ENCODE measurements at regions of chr13 and their contacts with region 1.

Region 1: GRCh38 chr13:83819156-83819555 is 63.1 kb downstream of the SLITRK1 start:
- DNase-seq: no peak
- H3K4me3 ChIP-seq: no peak overlapping the region
- H3K27ac ChIP-seq: no peak overlapping the region
- H3K4me1 ChIP-seq: no peaks in the 10 kb centered on the region
- H3K27me3 ChIP-seq: no peaks in the 10 kb centered on the region
- CTCF ChIP-seq: no peak

Region 2: GRCh38 chr13:83414393-83414792 is 404.8 kb before region 1 on chr13:
- CTCF ChIA-PET with region 1: no interaction called
- POLR2A ChIA-PET with region 1: no interaction called
- intact Hi-C with region 1: no loop called
- DNase-seq: no peak
- H3K4me3 ChIP-seq: no peak overlapping the region
- H3K27ac ChIP-seq: no peak overlapping the region
- H3K4me1 ChIP-seq: no peaks in the 10 kb centered on the region
- H3K27me3 ChIP-seq: no peaks in the 10 kb centered on the region
- CTCF ChIP-seq: no peak

Region 3: GRCh38 chr13:83681547-83681946 is 137.6 kb before region 1 on chr13:
- CTCF ChIA-PET with region 1: no interaction called
- POLR2A ChIA-PET with region 1: no interaction called
- intact Hi-C with region 1: no loop called
- DNase-seq: no peak
- H3K4me3 ChIP-seq: no peak overlapping the region
- H3K27ac ChIP-seq: no peak overlapping the region
- H3K4me1 ChIP-seq: no peaks in the 10 kb centered on the region
- H3K27me3 ChIP-seq: no peaks in the 10 kb centered on the region
- CTCF ChIP-seq: no peak

Region 4: GRCh38 chr13:83765796-83766195 is 53.4 kb before region 1 on chr13:
- CTCF ChIA-PET with region 1: no interaction called
- POLR2A ChIA-PET with region 1: no interaction called
- intact Hi-C with region 1: no loop called
- DNase-seq: no peak
- H3K4me3 ChIP-seq: no peak overlapping the region
- H3K27ac ChIP-seq: no peak overlapping the region
- H3K4me1 ChIP-seq: no peaks in the 10 kb centered on the region
- H3K27me3 ChIP-seq: no peaks in the 10 kb centered on the region
- CTCF ChIP-seq: no peak

Region 5: DNA sequence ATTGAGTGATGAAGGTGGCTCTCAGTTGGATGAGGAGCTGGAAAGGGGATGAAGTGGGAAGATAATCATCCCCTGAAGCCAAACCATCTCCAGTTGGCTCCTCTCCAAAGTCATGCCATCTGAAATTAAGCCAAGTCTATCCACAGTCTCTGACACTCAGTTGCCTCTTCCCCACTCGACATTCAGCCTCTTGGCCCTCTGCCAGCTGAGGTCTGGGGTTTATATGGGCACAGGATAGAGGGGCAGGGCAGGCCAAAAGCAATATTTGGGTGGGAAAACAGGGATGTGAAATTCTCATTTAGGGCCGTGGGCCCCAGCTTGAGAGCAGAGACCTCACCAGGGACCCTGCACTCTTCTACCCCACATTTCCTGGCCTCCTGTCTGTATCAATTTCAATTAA is 22.8 kb before region 1 on chr13:
- CTCF ChIA-PET with region 1: no interaction called
- POLR2A ChIA-PET with region 1: no interaction called
- intact Hi-C with region 1: loop called (anchors 2 kb)
- DNase-seq: no peak
- H3K4me3 ChIP-seq: no peak overlapping the region
- H3K27ac ChIP-seq: no peak overlapping the region
- H3K4me1 ChIP-seq: no peaks in the 10 kb centered on the region
- H3K27me3 ChIP-seq: no peaks in the 10 kb centered on the region
- CTCF ChIP-seq: no peak

Region 6: DNA sequence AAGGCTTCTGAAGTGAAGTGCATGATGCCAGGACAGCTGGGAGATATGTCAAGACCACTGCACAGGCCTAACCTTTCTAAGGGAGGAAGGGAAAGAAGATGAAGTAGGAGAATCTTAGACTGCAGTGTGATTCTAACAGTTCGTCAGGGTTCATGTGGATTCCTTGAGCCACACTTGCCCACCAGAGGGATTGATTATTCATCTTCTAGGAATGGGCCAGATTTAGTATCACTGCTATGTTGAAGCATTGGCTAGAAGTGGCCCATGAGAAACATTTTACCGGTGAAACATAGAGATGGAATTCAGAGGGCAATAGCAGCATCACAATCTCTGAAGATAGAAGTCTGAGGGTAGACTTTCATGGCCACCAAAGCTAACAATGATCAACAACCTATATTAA is 613.9 kb after region 1 on chr13:
- CTCF ChIA-PET with region 1: no interaction called
- POLR2A ChIA-PET with region 1: no interaction called
- intact Hi-C with region 1: no loop called
- DNase-seq: no peak
- H3K4me3 ChIP-seq: no peak overlapping the region
- H3K27ac ChIP-seq: no peak overlapping the region
- H3K4me1 ChIP-seq: no peaks in the 10 kb centered on the region
- H3K27me3 ChIP-seq: no peaks in the 10 kb centered on the region
- CTCF ChIP-seq: no peak

Measured in PC-9 (cell line).